CD8-positive, alpha-beta T cell (primary cell): ENCODE measurements at regions of chr19 and their contacts with region 1.

Region 1: DNA sequence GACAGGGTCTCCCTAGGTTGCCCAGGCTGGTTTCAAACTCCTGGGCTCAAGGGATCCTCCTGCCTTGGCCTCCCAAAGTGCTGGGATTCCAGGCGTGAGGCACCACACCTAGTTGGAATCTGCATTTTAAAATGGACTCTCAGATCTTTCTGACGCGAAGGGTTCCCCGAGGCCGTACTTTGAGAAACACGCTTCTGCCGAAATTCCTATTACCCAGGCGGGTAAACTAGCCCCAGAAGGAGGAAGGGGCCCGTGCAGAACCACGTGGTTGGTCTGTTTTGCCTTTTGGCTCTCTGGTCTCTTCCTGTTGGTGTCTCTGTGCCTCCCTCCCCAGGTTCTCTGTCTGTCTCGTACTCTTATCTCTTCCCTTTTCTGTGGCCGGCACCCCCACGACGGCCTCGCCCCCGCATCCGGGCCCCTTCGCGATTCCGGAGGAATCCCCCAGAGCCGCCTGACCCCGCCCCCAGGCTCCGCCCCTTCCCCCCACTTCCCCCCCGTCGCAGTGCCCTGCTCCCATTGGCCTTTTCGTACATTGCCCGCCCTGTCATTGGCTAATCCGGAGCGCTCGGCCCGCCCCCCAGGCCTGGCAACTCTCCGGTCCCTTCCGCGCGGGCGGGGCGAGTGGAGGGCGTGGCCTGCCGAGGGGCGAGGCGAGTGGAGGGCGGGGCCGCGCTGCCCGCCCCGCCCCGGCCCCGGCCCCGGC is at the start of gene TNFAIP8L1:
- DNase-seq: peak; percentile 97 to 100 (median 99)
- ATAC-seq: peak; percentile 94
- H3K4me3 ChIP-seq: peak within 1 kb of the TSS; percentile 83 to 94
- H3K4me3 Mint-ChIP-seq: peak within 1 kb of the TSS; percentile 94
- H3K27ac ChIP-seq: peak within 1 kb of the TSS; percentile 68 to 96
- H3K27ac Mint-ChIP-seq: peak within 1 kb of the TSS; percentile 95
- H3K4me1 ChIP-seq: peaks cover 45% of the 10 kb centered on the region
- H3K4me1 Mint-ChIP-seq: peaks cover 34% of the 10 kb centered on the region
- H3K27me3 ChIP-seq: no peaks in the 10 kb centered on the region
- H3K27me3 Mint-ChIP-seq: no peaks in the 10 kb centered on the region
- CTCF ChIP-seq: no peak
- total RNA-seq, gene TNFAIP8L1: 4.3 to 4.5 TPM

Region 2: DNA sequence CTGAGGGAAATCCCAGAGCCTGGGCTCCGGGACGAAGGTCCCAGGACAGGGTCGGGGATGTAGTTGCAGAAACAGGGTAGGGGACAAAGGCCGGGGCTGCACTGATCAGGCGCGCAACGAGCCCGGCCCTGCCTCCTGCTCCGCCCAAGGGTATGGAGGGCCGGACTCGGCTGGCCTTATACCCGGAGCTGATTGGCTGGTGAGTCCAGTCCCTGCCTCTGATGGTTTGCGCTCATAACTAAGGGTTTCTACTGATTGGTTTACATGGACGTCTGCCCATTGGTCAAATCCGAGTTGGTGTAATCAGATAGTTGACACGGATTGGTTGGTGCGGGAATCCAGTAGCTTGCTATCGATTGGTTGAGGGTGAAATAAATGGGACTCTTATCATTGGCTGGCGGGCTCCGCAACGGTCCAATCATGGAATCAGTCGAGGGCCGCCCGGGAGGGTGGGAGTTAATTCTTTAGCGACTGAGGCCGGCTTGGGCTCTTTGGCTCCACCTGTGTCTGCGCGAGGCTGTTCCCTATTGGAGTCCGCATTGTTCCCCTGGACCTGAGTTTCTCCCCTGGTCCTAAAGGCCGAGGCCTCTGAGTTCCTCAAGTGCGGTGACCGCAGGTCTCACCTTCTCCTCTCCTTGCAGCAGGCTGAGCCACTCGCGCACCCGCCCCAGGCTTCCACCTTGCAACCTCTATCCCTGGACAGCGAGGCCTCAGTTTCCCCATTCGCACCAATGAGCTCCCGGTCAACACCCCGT is 296.2 kb before region 1 on chr19:
- CTCF ChIA-PET with region 1: no interaction called
- POLR2A ChIA-PET with region 1: no interaction called
- intact Hi-C with region 1: loop called in 1 of 2 experiments (anchors 2 kb)
- DNase-seq: peak; percentile 80 to 99 (median 87)
- ATAC-seq: peak; percentile 78
- H3K4me3 ChIP-seq: peak overlapping the region; percentile 72 to 100
- H3K4me3 Mint-ChIP-seq: peak overlapping the region; percentile 92
- H3K27ac ChIP-seq: peak overlapping the region; percentile 81 to 83
- H3K27ac Mint-ChIP-seq: peak overlapping the region; percentile 91
- H3K4me1 ChIP-seq: peaks cover 20% of the 10 kb centered on the region
- H3K4me1 Mint-ChIP-seq: peaks cover 36% of the 10 kb centered on the region
- H3K27me3 ChIP-seq: no peaks in the 10 kb centered on the region
- H3K27me3 Mint-ChIP-seq: no peaks in the 10 kb centered on the region
- CTCF ChIP-seq: no peak

Region 3: DNA sequence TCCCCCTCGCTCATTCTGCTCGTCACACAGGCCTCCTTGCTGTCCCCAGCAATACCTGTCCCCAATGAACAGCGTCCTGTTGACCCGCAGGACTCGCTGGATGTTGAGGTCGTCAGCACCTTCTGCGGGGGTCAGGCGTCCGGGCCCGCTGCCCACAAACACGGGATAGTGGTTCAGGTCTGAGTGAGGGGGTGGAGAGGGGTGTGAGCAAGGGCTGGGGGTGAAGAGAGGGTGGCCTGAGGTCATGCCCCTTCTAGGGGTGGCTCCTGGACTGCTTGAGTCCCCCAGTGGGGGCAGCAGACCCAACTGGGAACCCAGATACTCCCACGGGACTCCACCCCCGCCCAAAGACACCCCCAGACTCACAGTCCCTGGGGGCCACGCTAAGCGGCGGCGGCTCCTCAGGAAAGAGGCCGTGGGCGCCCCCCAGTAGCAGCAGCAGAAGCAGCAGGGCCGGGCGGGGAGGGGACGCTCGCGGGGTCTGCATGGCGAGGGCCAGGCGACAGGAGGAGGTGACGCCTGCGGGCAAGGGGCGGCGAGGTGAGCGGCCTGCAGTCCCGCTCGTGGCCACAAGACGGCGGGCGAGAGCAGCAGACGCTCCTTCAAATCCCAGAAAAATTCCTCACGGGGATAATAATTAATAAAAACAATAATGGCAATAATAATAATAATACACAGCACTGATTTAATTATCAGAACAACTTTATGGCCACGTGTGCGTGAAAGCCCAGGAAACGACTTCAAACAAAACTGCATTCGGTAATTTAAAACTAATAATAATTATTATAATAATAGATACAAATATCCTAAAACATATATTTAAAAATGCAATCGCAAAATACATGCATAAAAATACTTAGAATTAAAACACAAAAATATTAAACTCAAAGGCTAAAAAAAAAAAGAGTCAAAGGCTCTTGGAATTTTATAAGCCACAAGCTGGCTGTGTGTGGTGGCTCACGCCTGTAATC is 80.7 kb before region 1 on chr19:
- CTCF ChIA-PET with region 1: interaction called, 14 read pairs
- POLR2A ChIA-PET with region 1: no interaction called
- intact Hi-C with region 1: loop called (anchors 1 to 2 kb)
- DNase-seq: peak in 7 of 9 experiments; percentile 16 to 58 (median 48)
- ATAC-seq: no peak
- H3K4me3 ChIP-seq: no peak overlapping the region
- H3K4me3 Mint-ChIP-seq: no peak overlapping the region
- H3K27ac ChIP-seq: no peak overlapping the region
- H3K27ac Mint-ChIP-seq: no peak overlapping the region
- H3K4me1 ChIP-seq: no peaks in the 10 kb centered on the region
- H3K4me1 Mint-ChIP-seq: no peaks in the 10 kb centered on the region
- H3K27me3 ChIP-seq: no peaks in the 10 kb centered on the region
- H3K27me3 Mint-ChIP-seq: peaks cover 6% of the 10 kb centered on the region
- CTCF ChIP-seq: peak; percentile 100

Region 4: GRCh38 chr19:4576016-4576933 is 62.7 kb before region 1 on chr19:
- CTCF ChIA-PET with region 1: interaction called, 75 read pairs
- POLR2A ChIA-PET with region 1: no interaction called
- intact Hi-C with region 1: loop called in 1 of 2 experiments (anchors 1 kb)
- DNase-seq: peak; percentile 39 to 80 (median 66)
- ATAC-seq: peak; percentile 62
- H3K4me3 ChIP-seq: no peak overlapping the region
- H3K4me3 Mint-ChIP-seq: no peak overlapping the region
- H3K27ac ChIP-seq: no peak overlapping the region
- H3K27ac Mint-ChIP-seq: no peak overlapping the region
- H3K4me1 ChIP-seq: no peaks in the 10 kb centered on the region
- H3K4me1 Mint-ChIP-seq: no peaks in the 10 kb centered on the region
- H3K27me3 ChIP-seq: peaks cover 16 to 19% of the 10 kb centered on the region in 2 experiments
- H3K27me3 Mint-ChIP-seq: peaks cover 37% of the 10 kb centered on the region
- CTCF ChIP-seq: peak; percentile 19

Region 5: DNA sequence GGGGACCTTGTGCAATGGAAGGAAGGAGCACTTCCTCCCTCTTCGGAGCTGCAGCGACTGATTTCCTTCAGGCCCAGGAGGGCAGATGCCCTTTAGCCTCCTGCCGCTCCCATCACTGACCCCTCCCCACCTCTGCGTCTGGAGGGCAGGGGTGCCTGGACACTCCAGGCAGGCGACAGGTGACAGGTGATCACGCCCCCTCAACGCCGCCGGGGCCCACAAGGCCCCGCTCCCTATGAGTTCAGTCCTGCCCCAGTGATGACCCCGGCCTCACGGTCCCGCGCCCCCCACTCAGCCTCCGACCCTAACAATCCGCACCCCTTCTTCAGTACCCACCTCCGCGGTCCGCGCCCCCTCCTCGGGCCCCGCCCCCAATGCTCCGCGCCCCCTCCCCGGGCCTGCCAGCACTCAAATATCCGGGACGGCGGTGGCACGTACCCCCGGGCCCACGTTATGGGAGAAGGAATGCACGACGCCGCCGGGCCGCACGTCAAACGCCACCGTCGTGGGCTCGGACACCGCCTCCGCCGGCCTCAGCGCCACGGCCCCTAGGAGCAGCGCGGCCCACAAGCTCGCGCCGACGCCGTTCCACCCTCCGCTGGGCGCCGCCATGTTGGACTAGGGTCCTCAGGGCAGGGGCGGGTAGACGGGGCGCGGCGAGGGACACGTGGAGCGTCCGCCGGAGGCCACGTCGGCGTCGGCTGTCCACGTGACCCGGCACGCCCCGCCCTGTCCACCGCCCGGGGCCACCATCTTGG is 30.9 kb after region 1 on chr19 and contains the start of gene MYDGF:
- CTCF ChIA-PET with region 1: interaction called, 6 read pairs
- POLR2A ChIA-PET with region 1: no interaction called
- intact Hi-C with region 1: loop called (anchors 1 kb)
- DNase-seq: peak; percentile 87 to 96 (median 92)
- ATAC-seq: peak; percentile 98
- H3K4me3 ChIP-seq: peak within 1 kb of the TSS; percentile 75 to 84
- H3K4me3 Mint-ChIP-seq: peak within 1 kb of the TSS; percentile 88
- H3K27ac ChIP-seq: peak within 1 kb of the TSS; percentile 58 to 71
- H3K27ac Mint-ChIP-seq: peak within 1 kb of the TSS; percentile 90
- H3K4me1 ChIP-seq: peaks cover 12% of the 10 kb centered on the region
- H3K4me1 Mint-ChIP-seq: peaks cover 18% of the 10 kb centered on the region
- H3K27me3 ChIP-seq: no peaks in the 10 kb centered on the region
- H3K27me3 Mint-ChIP-seq: no peaks in the 10 kb centered on the region
- CTCF ChIP-seq: no peak
- total RNA-seq, gene MYDGF: 30.1 to 30.3 TPM